Activated CD4-positive, alpha-beta memory T cell treated with anti-CD3 and anti-CD28 coated beads for 36 hours (primary cell): ENCODE measurements at regions of chr14 and their contacts with region 1.

Region 1: DNA sequence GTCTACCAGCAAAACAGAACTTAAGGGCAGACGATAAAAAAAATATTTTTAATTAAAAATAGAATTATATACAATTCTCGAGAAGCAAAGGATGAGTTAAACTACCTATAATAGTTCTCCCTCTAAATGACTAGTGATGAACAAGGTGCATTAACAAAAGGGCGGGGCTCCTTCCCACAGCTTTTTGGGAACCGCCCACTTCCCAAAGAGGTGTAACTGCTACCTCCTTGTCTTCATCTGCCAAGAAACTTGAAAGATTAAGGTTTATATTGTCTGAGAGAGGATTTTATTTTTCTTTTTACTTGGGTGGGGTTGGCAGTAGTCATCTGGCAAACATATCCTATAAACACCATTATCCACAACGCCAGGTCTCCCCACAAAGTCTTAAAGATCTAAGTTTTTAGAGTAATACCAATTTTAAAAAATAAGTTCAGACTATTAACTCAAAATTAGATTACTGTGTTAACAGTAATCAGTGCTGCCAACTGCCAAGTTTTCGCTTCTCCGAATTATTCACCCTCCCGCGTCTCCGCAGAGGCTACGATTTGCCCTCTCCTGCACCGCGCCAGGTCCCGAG is 931 bp downstream of the RALGAPA1 start:
- DNase-seq: peak; percentile 48
- H3K4me3 Mint-ChIP-seq: peak overlapping the region; percentile 99
- H3K27ac Mint-ChIP-seq: peak overlapping the region; percentile 91
- H3K4me1 Mint-ChIP-seq: peaks cover 20% of the 10 kb centered on the region
- H3K27me3 Mint-ChIP-seq: no peaks in the 10 kb centered on the region

Region 2: GRCh38 chr14:35438910-35439713 is 369.1 kb before region 1 on chr14:
- CTCF ChIA-PET with region 1: interaction called, 3 read pairs
- POLR2A ChIA-PET with region 1: no interaction called
- intact Hi-C with region 1: loop called (anchors 2 kb)
- DNase-seq: no peak
- H3K4me3 Mint-ChIP-seq: no peak overlapping the region
- H3K27ac Mint-ChIP-seq: no peak overlapping the region
- H3K4me1 Mint-ChIP-seq: peaks cover 7% of the 10 kb centered on the region
- H3K27me3 Mint-ChIP-seq: no peaks in the 10 kb centered on the region

Region 3: DNA sequence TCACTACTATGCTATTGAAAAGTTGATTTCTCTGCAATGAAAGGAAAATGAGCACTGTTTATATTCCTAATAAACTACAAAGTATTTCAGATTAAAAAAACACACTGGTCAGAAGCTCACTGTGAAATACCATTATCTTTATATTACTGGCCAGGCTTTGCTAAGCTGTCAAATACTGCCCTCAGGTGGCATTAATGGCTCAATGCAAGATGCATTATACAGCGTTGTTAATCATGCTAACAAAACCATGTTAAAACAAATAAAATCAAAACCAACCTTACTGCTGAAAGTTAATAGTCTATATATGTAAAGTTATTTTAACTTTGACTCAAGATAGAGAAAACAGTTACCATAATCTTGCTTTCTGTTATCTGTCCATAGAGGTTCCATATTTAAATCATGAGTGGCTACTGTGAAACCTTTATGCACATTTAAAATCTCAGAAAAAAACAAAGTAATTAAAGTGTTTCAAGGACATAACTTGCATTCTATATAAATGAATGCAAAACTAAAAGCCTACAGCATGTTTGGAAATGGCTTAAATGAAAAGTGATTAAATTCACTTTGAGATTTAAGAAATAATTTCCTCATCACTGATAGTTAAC is 120.7 kb before region 1 on chr14:
- CTCF ChIA-PET with region 1: interaction called, 7 read pairs
- POLR2A ChIA-PET with region 1: no interaction called
- intact Hi-C with region 1: loop called (anchors 2 kb)
- DNase-seq: peak; percentile 26
- H3K4me3 Mint-ChIP-seq: no peak overlapping the region
- H3K27ac Mint-ChIP-seq: no peak overlapping the region
- H3K4me1 Mint-ChIP-seq: peaks cover 15% of the 10 kb centered on the region
- H3K27me3 Mint-ChIP-seq: no peaks in the 10 kb centered on the region

Region 4: GRCh38 chr14:35766700-35767082 is 41.5 kb before region 1 on chr14:
- CTCF ChIA-PET with region 1: no interaction called
- POLR2A ChIA-PET with region 1: no interaction called
- intact Hi-C with region 1: loop called (anchors 5 kb)
- DNase-seq: peak; percentile 60
- H3K4me3 Mint-ChIP-seq: no peak overlapping the region
- H3K27ac Mint-ChIP-seq: no peak overlapping the region
- H3K4me1 Mint-ChIP-seq: peaks cover 11% of the 10 kb centered on the region
- H3K27me3 Mint-ChIP-seq: no peaks in the 10 kb centered on the region

Region 5: DNA sequence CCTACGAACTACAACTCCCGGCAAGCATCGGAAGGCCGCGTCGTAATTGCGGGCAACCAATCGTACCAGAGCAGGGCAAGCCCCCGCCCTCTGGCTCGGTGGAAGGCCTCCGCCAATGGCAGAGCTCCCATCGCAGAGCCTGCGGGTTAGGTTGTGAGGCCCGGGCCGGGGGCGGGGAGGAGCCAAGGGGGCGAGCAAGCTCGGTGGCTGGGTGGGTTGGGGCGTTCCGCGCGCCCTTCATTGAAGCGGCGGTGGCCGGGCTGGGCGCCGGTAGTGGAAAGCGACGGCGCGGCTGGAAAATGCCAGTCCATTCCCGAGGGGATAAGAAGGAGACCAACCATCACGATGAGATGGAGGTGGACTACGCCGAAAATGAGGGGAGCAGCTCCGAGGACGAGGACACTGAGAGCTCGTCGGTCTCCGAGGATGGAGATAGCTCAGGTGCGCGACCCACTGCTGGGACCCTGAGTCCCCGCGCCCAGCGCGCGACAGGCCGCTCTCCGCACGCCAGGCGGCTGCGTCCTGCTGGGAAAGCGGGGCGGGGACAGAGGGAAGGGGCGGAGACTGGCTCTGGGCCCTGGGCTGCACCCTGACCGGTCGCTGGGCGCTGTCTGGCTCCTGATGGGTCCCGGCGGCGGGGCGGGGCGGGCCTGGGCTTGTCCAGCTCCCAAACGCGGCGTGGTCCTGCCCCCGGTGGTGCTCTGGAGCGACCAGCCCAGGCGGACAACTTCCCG is 18.2 kb after region 1 on chr14 and contains the start of gene BRMS1L:
- CTCF ChIA-PET with region 1: interaction called, 10 read pairs
- POLR2A ChIA-PET with region 1: interaction called, 5 read pairs
- intact Hi-C with region 1: loop called (anchors 1 kb)
- DNase-seq: peak; percentile 98
- H3K4me3 Mint-ChIP-seq: peak within 1 kb of the TSS; percentile 78
- H3K27ac Mint-ChIP-seq: peak within 1 kb of the TSS; percentile 93
- H3K4me1 Mint-ChIP-seq: peaks cover 23% of the 10 kb centered on the region
- H3K27me3 Mint-ChIP-seq: no peaks in the 10 kb centered on the region
- total RNA-seq, gene BRMS1L: 5.6 to 6.1 TPM

Region 6: DNA sequence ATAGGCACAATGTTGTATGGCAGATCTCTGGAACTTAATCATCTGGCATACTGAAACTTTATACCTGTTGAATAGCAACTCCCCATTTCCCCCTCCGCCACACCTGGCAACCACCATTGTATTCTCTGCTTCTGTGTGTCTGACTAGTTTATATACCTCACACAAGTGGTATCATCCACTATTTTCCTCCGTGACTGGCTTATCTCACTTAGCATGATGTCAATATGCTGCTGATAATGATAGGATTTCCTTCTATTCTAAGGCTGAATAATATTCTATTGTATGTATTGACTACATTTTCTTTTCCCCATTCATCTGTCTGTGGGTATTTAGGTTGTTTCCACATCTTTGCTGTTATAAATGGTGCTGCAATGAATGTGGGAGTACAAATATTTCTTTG is 39.5 kb after region 1 on chr14:
- CTCF ChIA-PET with region 1: no interaction called
- POLR2A ChIA-PET with region 1: no interaction called
- intact Hi-C with region 1: no loop called
- DNase-seq: no peak
- H3K4me3 Mint-ChIP-seq: no peak overlapping the region
- H3K27ac Mint-ChIP-seq: no peak overlapping the region
- H3K4me1 Mint-ChIP-seq: peaks cover 2% of the 10 kb centered on the region
- H3K27me3 Mint-ChIP-seq: no peaks in the 10 kb centered on the region

Region 7: GRCh38 chr14:36035675-36036074 is 227.5 kb after region 1 on chr14:
- CTCF ChIA-PET with region 1: no interaction called
- POLR2A ChIA-PET with region 1: no interaction called
- intact Hi-C with region 1: no loop called
- DNase-seq: no peak
- H3K4me3 Mint-ChIP-seq: no peak overlapping the region
- H3K27ac Mint-ChIP-seq: no peak overlapping the region
- H3K4me1 Mint-ChIP-seq: no peaks in the 10 kb centered on the region
- H3K27me3 Mint-ChIP-seq: no peaks in the 10 kb centered on the region

Region 8: GRCh38 chr14:36096090-36096489 is 287.9 kb after region 1 on chr14:
- CTCF ChIA-PET with region 1: no interaction called
- POLR2A ChIA-PET with region 1: no interaction called
- intact Hi-C with region 1: no loop called
- DNase-seq: no peak
- H3K4me3 Mint-ChIP-seq: no peak overlapping the region
- H3K27ac Mint-ChIP-seq: no peak overlapping the region
- H3K4me1 Mint-ChIP-seq: no peaks in the 10 kb centered on the region
- H3K27me3 Mint-ChIP-seq: peaks cover 11% of the 10 kb centered on the region